Heart left ventricle (tissue), 16 donors: ENCODE measurements at regions of chr22 and their contacts with region 1.

Region 1: DNA sequence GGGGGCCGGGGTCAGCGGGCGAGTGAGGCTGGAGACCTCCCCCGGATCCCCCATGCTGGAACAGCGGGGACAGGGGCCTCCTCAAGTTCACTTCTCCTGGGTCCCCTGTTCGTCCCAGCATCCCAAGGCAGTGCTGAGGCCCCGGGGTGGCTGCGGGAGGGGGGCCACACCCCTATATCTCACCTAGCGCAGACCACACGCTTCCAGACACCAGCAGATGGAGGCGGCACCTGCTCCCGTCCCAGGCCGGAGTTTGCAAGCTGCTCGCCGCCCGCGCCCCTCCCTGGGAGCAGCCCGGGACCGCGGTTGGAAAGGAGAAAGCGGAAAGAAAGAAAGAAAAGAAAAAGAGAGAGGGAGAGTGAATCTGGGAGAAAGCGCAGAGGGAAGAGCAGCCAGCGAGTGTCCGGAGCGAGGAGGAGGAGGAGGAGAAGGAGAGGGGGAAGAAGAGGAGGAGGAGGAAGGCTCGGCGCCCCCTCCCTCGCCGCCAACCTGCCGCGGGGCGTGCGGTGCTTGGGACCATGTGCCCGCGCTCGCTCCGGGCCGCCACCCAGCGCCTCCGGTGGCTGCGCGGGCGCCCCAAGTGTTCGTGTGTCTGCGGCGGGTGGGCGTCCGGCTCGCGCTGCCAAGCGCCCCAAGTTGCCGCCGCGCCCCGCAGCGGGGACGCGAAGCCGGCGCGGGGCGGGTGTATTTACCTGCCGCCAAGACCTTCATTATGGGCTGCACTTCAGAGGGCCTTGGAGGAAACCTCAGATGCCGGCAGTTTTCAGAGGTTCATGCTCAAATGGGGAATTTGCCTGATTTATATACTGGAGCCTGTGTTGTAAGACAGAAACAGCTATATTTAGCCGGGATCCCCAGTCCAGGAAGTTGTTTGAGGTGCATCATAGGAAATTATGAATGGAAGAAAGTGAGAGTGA is at the start of gene LIF:
- DNase-seq: no peak
- ATAC-seq: peak in 1 of 4 donors; percentile 27
- H3K4me3 ChIP-seq: peak within 1 kb of the TSS; percentile 0 to 62 (median 45)
- H3K27ac ChIP-seq: peak within 1 kb of the TSS in 3 of 12 donors; percentile 22 to 64 (median 23)
- H3K4me1 ChIP-seq: peaks cover 0 to 32% (median 12%) of the 10 kb centered on the region in 12 donors
- H3K27me3 ChIP-seq: peaks cover 10 to 68% (median 31%) of the 10 kb centered on the region in 9 donors
- CTCF ChIP-seq: peak in 2 of 12 donors; percentile 8 to 16
- POLR2A ChIP-seq: no peak
- total RNA-seq, gene LIF: 0.12 to 11.6 (median 0.70) TPM in 8 of 9 donors, not detected in the other

Region 2: DNA sequence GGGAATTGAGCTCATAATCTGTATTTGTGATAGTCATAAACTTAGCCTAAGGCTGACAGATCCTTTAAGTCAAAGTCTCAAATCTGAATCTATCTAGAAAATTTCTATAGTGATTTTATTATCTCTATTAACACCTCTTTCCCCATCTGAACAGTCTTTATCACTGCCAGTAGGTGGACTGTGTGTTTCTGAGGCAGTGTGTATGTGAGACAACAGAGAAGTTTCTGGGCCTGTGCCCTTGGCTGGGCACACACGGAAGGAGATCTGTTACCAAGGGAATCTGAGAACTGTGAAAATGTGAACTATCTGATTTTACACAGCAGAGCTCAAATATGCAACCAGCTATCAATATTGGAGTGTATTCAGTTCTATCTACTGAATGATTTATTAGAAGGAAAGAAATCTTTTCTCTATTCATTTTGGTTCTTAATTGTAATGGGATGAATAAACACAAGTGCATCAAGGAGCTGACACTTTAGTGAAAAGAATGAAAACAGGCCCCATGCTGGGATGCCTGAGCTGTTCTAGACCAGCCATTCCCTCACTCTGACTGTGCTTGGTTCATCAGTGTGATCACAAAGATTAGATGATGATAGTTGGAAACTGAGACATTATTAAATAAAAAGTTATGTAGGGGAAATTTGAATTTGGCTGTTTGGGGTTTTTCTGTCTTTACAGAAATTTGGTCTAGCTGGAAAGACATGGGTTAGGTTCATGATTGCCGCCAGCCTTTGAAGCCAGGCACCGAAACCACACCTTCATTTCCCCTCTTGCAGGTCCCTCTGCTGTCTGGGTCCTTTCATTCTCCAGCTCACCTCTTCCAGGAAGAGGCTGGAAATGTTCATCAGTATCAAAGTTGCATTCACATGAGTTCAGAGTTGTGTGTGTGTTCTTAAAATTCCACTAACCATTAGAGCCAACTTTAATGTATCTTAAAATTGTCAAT is 67.8 kb before region 1 on chr22:
- intact Hi-C with region 1: no loop called
- DNase-seq: no peak
- ATAC-seq: no peak
- H3K4me3 ChIP-seq: no peak overlapping the region
- H3K27ac ChIP-seq: no peak overlapping the region
- H3K4me1 ChIP-seq: peaks cover 0 to 12% (median 0%) of the 10 kb centered on the region in 12 donors
- H3K27me3 ChIP-seq: peaks cover 0 to 27% (median 0%) of the 10 kb centered on the region in 9 donors
- CTCF ChIP-seq: no peak
- POLR2A ChIP-seq: no peak

Region 3: GRCh38 chr22:30205281-30206115 is 40.7 kb before region 1 on chr22:
- intact Hi-C with region 1: loop called in 5 of 10 experiments (anchors 5 kb)
- DNase-seq: peak in 4 of 5 donors; percentile 33 to 82 (median 64)
- ATAC-seq: peak; percentile 11 to 69 (median 64)
- H3K4me3 ChIP-seq: peak overlapping the region in 1 of 12 donors; percentile 19
- H3K27ac ChIP-seq: peak overlapping the region in 11 of 12 donors; percentile 18 to 89 (median 66)
- H3K4me1 ChIP-seq: peaks cover 0 to 59% (median 12%) of the 10 kb centered on the region in 12 donors
- H3K27me3 ChIP-seq: peaks cover 0 to 65% (median 7%) of the 10 kb centered on the region in 9 donors
- CTCF ChIP-seq: no peak
- POLR2A ChIP-seq: no peak

Region 4: DNA sequence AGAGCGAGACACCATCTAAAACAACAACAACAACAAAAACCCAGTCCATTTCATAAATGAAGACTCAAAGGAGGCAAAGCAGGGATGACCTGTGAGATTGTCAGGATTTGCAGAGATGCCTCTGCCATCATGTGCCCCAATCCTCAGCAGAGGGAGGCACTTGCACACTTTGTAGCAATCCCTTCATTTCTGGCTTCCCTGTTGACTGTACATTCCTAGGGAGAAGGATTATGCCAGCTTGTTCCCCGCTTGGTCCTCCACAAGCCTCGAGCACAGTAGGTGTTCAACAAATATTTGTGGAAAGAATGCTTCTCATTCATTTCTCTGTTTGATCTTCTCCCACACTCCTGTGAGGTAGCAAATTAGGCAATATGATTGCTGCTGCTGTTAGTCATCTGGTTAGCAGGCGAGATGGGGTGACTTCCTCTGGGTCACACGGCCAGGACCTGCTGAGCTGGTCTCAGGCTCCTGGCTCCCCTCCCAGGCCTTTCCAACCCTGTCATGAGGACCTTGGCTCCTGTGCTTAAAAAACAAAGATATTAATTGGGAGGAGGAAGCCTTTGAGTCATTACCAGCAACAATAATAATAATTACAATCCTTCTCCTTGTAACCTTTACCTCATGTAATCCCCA is 33.8 kb before region 1 on chr22:
- intact Hi-C with region 1: loop called in 5 of 10 experiments (anchors 5 kb)
- DNase-seq: peak in 2 of 5 donors; percentile 69 to 76
- ATAC-seq: peak; percentile 35 to 75 (median 64)
- H3K4me3 ChIP-seq: no peak overlapping the region
- H3K27ac ChIP-seq: peak overlapping the region in 1 of 12 donors; percentile 68
- H3K4me1 ChIP-seq: peaks cover 0 to 37% (median 9%) of the 10 kb centered on the region in 12 donors
- H3K27me3 ChIP-seq: peaks cover 0 to 32% (median 4%) of the 10 kb centered on the region in 9 donors
- CTCF ChIP-seq: no peak
- POLR2A ChIP-seq: no peak

Region 5: GRCh38 chr22:30289134-30289979 is 43.1 kb after region 1 on chr22 and contains the start of gene CASTOR1:
- intact Hi-C with region 1: no loop called
- DNase-seq: peak; percentile 99 to 100 (median 99)
- ATAC-seq: peak; percentile 85 to 91 (median 90)
- H3K4me3 ChIP-seq: peak within 1 kb of the TSS; percentile 62 to 99 (median 87)
- H3K27ac ChIP-seq: peak within 1 kb of the TSS; percentile 84 to 98 (median 95)
- H3K4me1 ChIP-seq: peaks cover 12 to 45% (median 37%) of the 10 kb centered on the region in 12 donors
- H3K27me3 ChIP-seq: no peaks in the 10 kb centered on the region
- CTCF ChIP-seq: peak in 1 of 12 donors; percentile 7
- POLR2A ChIP-seq: peak; percentile 68 to 87
- total RNA-seq, gene CASTOR1: 3.8 to 16.6 (median 7.1) TPM

Region 6: DNA sequence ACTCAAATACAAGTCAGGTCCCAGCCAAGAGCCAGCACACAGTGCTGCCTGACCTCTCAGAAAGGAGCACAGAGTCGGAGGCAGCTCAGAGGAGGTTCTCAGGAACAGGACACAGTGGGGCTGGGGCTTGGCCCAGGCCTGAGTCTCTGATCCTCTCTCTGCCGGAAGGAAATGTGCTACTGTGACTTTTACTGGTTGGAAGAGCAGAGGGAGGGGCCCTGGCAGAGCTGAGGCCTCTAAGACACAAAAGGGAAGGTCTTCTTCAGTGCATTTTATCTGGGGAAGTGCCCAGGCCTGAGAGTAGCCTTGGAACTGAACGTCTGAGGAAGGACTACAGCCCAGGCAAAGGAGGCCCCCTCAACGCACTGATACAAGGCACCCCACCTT is 59.3 kb after region 1 on chr22:
- intact Hi-C with region 1: no loop called
- DNase-seq: peak; percentile 72 to 86 (median 78)
- ATAC-seq: peak; percentile 73 to 91 (median 81)
- H3K4me3 ChIP-seq: peak overlapping the region in 2 of 12 donors; percentile 15 to 41
- H3K27ac ChIP-seq: peak overlapping the region; percentile 62 to 95 (median 81)
- H3K4me1 ChIP-seq: peaks cover 26 to 100% (median 89%) of the 10 kb centered on the region in 12 donors
- H3K27me3 ChIP-seq: no peaks in the 10 kb centered on the region
- CTCF ChIP-seq: no peak
- POLR2A ChIP-seq: peak in 1 of 2 donors; percentile 62